T-cell (primary cell): ENCODE measurements at regions of chr2 and their contacts with region 1.

Region 1: DNA sequence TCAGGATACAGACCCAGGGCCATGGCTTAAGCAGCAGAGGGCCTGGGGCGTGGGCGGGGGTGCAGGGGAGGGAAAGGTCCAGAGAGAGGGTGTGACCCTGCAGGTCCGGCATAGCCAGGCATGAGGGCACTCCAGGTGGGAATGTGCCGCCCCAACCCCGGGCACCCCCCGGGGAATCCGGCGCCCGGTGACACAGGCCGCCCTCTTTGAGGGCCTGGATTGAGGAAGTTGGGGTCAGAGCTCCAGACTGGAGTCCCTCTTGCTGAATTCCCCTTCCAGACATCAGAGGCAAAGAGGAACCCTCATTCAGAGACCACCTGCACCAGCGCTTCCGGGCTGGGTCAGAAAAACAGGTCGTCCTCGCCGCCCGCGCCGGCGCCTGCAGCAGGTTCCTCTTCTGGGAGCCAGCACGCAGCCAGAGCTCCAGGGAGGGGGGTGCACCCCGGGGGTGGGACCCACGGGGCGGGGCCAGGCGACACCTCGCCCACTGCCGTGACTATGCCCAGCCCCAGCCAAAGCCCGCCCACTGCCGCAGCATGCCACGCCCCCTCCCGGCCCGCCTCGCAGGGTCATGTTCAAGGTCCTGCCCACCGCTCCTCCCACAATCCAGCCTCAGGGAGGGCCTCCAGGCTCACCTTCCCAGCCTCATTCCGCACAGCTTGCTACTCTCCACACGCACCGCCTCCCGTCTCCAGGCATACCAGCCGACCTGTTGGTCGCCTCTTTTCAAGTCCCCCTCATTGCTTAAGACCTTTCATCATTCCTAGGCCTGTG is 98.3 kb upstream of the ID2 start:
- DNase-seq: peak; percentile 38 to 76 (median 59)
- ATAC-seq: peak; percentile 75 to 91 (median 80)
- H3K4me3 ChIP-seq: peak overlapping the region in 1 of 2 donors; percentile 7
- H3K4me3 Mint-ChIP-seq: peak overlapping the region in 2 of 3 donors; percentile 45 to 79
- H3K27ac ChIP-seq: no peak overlapping the region
- H3K27ac Mint-ChIP-seq: no peak overlapping the region
- H3K4me1 ChIP-seq: peaks cover 9 to 58% of the 10 kb centered on the region in 2 experiments
- H3K4me1 Mint-ChIP-seq: peaks cover 36 to 47% (median 38%) of the 10 kb centered on the region in 3 donors
- H3K27me3 ChIP-seq: peaks cover 0 to 46% of the 10 kb centered on the region in 2 experiments
- H3K27me3 Mint-ChIP-seq: peaks cover 0 to 9% of the 10 kb centered on the region in 2 donors

Region 2: DNA sequence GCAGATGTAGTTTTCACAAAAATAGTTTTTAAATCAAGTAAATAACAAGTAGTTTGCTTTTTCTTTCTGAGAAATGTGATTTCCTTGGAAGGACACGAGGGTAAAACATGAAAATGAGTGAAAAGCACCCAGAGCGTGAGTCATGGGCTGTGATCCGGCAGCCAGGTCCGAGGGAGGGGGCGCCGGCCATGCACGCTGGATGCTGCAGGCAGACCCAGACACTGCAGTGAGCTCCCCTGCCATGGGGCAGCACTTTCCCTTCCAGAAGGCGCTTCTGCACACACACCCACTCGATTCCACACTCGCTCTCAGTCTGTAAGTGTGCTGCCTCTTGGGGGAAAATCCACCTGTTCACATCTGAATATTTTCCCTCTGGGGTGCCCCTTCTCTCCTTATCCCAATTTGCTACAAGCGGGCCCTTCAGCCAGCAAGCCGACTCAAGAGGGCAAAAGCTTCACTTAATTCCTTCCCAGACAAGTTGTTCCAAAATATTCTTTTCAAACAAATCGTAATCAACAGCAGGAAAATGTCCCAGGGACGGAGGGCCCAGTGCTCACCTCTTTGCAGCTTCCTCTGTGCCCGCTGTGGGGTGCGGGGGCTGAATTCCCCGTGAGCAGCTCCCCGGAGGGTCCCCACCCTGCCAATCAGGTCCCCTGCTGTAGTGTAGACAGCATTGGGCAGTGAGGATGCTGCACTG is 11.3 kb after region 1 on chr2:
- CTCF ChIA-PET with region 1: no interaction called
- POLR2A ChIA-PET with region 1: interaction called in 1 of 2 experiments, 10 read pairs
- DNase-seq: no peak
- ATAC-seq: no peak
- H3K4me3 ChIP-seq: no peak overlapping the region
- H3K4me3 Mint-ChIP-seq: no peak overlapping the region
- H3K27ac ChIP-seq: no peak overlapping the region
- H3K27ac Mint-ChIP-seq: no peak overlapping the region
- H3K4me1 ChIP-seq: no peaks in the 10 kb centered on the region
- H3K4me1 Mint-ChIP-seq: peaks cover 0 to 9% (median 2%) of the 10 kb centered on the region in 3 donors
- H3K27me3 ChIP-seq: peaks cover 0 to 6% of the 10 kb centered on the region in 2 experiments
- H3K27me3 Mint-ChIP-seq: peaks cover 3 to 4% of the 10 kb centered on the region in 2 donors